Ascending aorta (tissue), 2 donors: ENCODE measurements at regions of chr9 and their contacts with region 1.

Region 1: DNA sequence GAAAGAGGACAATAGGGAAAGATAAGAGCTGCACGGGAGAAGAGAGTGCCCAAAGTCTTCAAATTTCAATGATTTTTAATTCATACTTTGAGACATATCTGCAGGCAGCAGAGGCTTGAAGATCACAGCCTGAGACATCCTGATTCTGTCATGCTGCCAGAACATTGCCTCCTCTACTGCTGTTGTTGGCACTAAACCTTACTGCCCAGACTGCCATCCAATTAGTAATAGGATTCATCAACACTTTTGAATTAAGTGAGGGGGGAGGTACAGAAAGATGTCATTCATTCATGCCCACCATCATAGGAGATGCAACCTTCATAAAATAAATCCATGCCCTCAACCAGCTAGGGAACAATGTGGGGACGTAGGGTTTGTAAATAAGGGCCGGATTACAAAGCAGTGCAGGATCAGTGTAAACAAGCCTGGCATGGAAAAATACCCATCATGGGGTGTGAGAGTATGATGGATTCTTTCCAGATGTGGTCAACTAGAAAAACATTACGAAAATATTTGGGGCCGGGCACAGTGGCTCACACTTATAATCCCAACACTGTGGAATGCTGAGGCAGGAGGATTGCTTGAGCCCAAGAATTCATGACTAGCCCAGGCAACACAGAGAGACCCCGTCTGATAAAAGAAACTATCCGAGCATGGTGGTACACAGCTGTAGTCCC is 122.1 kb upstream of the DAPK1 start:
- DNase-seq: no peak
- H3K4me3 ChIP-seq: no peak overlapping the region
- H3K27ac ChIP-seq: no peak overlapping the region
- H3K4me1 ChIP-seq: no peaks in the 10 kb centered on the region
- H3K27me3 ChIP-seq: no peaks in the 10 kb centered on the region
- CTCF ChIP-seq: no peak

Region 2: DNA sequence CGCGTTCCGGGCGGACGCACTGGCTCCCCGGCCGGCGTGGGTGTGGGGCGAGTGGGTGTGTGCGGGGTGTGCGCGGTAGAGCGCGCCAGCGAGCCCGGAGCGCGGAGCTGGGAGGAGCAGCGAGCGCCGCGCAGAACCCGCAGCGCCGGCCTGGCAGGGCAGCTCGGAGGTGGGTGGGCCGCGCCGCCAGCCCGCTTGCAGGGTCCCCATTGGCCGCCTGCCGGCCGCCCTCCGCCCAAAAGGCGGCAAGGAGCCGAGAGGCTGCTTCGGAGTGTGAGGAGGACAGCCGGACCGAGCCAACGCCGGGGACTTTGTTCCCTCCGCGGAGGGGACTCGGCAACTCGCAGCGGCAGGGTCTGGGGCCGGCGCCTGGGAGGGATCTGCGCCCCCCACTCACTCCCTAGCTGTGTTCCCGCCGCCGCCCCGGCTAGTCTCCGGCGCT is 122.1 kb after region 1 on chr9 and contains the start of gene DAPK1:
- intact Hi-C with region 1: loop called (anchors 10 kb)
- DNase-seq: no peak
- H3K4me3 ChIP-seq: peak within 1 kb of the TSS; percentile 56 to 72
- H3K27ac ChIP-seq: peak within 1 kb of the TSS; percentile 40 to 58
- H3K4me1 ChIP-seq: no peaks in the 10 kb centered on the region
- H3K27me3 ChIP-seq: no peaks in the 10 kb centered on the region
- CTCF ChIP-seq: no peak
- total RNA-seq, gene DAPK1: 17.8 TPM